Common myeloid progenitor, CD34-positive (primary cell): ENCODE measurements at regions of chr2 and their contacts with region 1.

Region 1: GRCh38 chr2:197255543-197255942 is 55.0 kb downstream of the ANKRD44 start:
- DNase-seq: peak; percentile 85 to 96 (median 95)
- H3K4me3 ChIP-seq: peak overlapping the region in 5 of 7 experiments; percentile 28 to 71 (median 64)
- H3K27ac ChIP-seq: peak overlapping the region; percentile 78 to 91
- H3K4me1 ChIP-seq: peaks cover 31 to 52% (median 38%) of the 10 kb centered on the region in 4 experiments
- H3K27me3 ChIP-seq: no peaks in the 10 kb centered on the region

Region 2: DNA sequence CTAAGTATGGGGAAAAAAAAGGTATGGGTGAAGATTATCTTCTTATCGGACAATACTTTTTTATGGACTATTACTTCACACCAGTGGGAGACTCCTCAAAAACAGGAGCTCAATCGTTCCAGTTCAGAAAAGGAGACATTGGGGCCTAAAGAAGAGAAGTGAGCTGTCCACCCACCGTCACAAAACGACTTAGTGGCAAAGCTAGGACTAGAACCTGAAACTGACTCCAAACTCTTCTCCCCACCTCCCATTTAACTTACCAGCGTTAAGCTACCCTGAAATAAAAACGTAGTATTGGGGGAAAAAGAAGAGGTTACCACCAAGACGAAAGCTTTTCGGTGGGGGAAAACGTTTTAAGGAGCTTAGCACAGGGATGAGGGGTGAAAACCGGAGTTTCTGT is 456.6 kb before region 1 on chr2:
- CTCF ChIA-PET with region 1: no interaction called
- POLR2A ChIA-PET with region 1: no interaction called
- DNase-seq: no peak
- H3K4me3 ChIP-seq: peak overlapping the region; percentile 87 to 99 (median 93)
- H3K27ac ChIP-seq: peak overlapping the region; percentile 80 to 91
- H3K4me1 ChIP-seq: peaks cover 0 to 18% (median 9%) of the 10 kb centered on the region in 4 experiments
- H3K27me3 ChIP-seq: peaks cover 0 to 2% (median 0%) of the 10 kb centered on the region in 5 experiments

Region 3: GRCh38 chr2:197304556-197305011 is 49.0 kb after region 1 on chr2:
- CTCF ChIA-PET with region 1: interaction called, 15 read pairs
- POLR2A ChIA-PET with region 1: no interaction called
- DNase-seq: no peak
- H3K4me3 ChIP-seq: peak overlapping the region in 1 of 7 experiments; percentile 0
- H3K27ac ChIP-seq: peak overlapping the region; percentile 43 to 53
- H3K4me1 ChIP-seq: peaks cover 39 to 64% (median 53%) of the 10 kb centered on the region in 4 experiments
- H3K27me3 ChIP-seq: no peaks in the 10 kb centered on the region